ENCODE measurements at regions of chr18 and their contacts with region 1.

Region 1: DNA sequence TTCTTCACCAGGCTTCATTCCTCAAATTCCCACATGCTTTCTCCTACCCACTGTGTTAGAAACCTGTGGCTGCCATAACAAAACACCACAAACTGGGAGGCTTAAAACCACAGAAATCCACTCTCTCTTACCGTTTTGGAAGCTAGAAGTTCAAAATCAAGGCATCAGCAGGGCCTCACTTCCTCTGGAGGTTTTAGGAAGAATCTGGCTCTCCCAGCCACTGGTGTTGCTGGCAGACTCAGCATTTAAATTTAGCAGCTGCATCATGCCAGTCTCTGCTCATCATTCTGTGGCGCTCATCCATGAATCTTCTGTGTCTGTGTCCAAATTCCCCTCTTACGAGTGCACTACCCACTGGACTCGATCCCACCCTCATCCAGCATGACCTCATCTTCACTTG is 248.5 kb downstream of the ZNF516 start:
- DNase-seq: no peak

Region 2: DNA sequence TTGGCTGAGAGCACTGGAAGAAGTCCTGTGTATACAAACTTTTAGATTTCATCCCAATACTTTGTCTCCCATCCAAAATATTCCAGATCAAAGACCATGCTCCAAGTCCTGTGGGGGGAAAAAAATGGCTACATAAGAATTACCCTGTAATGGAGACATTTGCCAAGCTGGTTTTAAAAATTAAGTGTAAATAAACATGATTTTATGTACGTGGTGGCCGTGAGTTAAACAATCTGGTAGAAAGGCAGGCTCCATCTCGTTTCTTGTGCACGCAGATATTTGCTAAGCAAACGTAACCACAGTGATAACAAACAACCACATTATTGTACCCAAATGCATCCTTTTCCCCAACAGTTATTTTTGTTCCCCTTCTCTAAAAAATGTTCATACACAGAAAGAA is 72.0 kb after region 1 on chr18:
- intact Hi-C with region 1: loop called in 1 of 2 experiments (anchors 2 kb)
- DNase-seq: no peak